Naive thymus-derived CD4-positive, alpha-beta T cell (primary cell): ENCODE measurements at regions of chr19 and their contacts with region 1.

Region 1: DNA sequence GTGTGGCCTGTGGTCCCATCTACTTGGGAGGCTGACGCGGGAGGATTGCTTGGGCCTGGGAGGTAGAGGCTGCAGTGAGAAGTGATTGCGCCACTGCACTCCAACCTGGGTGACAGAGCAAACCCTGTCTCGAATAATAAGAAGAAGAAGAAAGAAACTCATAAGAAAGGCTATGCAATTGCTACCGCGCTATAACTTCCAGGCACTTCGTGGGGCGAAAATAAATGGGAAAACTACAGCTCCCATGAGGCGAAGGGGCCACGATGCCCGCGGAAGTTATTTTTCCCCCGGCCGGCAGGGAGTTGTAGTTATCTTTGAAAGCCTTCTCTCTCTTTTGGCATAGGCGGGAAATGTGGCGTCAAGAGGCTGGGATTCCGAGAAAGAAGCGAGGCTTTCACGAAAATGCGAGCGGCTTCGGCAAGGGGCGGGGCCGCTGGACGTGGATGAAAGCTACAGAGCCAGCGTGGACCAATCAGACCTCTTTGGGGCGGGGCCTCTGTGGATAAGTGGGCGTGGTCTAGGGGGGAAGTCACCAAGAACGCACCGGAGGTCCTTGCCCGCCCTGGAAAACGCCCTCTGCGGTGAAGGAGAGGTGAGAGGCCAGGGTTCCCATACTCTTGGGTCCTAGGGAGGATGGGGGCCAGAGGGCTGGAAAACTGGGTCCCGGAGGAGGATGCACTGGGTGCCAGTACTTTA is at the start of gene NUCB1:
- DNase-seq: peak; percentile 92 to 99 (median 98)
- ATAC-seq: peak; percentile 100
- H3K4me3 ChIP-seq: peak within 1 kb of the TSS; percentile 92
- H3K4me3 Mint-ChIP-seq: peak within 1 kb of the TSS; percentile 87 to 100 (median 98)
- H3K27ac ChIP-seq: peak within 1 kb of the TSS; percentile 92
- H3K27ac Mint-ChIP-seq: peak within 1 kb of the TSS; percentile 78 to 100 (median 98)
- H3K4me1 ChIP-seq: peaks cover 11 to 12% of the 10 kb centered on the region in 2 donors
- H3K4me1 Mint-ChIP-seq: peaks cover 14 to 44% (median 32%) of the 10 kb centered on the region in 7 donors
- H3K27me3 ChIP-seq: peaks cover 2 to 4% of the 10 kb centered on the region in 2 donors
- H3K27me3 Mint-ChIP-seq: peaks cover under 1 to 11% (median 2%) of the 10 kb centered on the region in 5 donors
- total RNA-seq, gene NUCB1: 128 to 252 (median 142) TPM

Region 2: DNA sequence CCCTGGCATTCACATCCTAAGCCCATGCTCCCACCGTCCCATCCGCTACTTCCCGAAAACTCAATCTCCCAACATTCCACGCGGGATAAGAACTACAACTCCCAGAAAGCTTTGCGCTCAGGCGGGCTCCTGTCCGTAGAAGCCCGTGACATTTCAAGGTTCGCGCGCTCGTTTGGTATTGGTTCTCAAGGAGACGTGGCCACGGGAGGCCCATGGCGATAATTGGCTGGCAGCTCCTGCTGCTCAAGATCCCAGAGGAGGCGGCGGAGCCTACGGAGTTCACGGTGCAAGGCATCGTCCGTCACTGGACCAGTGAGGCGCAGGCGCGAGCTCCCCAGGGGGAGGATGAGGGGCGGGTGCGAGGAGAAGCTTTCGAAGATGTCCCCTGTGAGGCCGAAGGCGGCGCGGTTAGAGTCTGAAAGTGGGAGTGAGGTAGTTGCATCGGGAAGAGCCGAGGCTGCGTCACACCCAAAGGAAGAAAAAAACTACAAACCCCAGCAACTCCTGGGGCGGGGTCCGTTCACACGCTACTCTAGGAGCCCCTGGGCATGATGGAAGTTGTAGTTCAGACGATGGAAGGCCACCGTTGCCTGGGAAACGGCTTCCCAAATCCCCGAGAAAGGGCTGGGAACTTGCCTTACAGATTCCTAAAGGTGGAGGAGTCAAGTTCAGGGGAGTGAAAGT is 179.2 kb before region 1 on chr19:
- CTCF ChIA-PET with region 1: no interaction called
- POLR2A ChIA-PET with region 1: no interaction called
- intact Hi-C with region 1: loop called in 1 of 2 experiments (anchors 2 kb)
- DNase-seq: peak; percentile 77 to 93 (median 89)
- ATAC-seq: peak; percentile 91
- H3K4me3 ChIP-seq: peak overlapping the region; percentile 92
- H3K4me3 Mint-ChIP-seq: peak overlapping the region; percentile 80 to 99 (median 97)
- H3K27ac ChIP-seq: peak overlapping the region; percentile 80
- H3K27ac Mint-ChIP-seq: peak overlapping the region; percentile 98 to 100 (median 99)
- H3K4me1 ChIP-seq: peaks cover 5 to 17% of the 10 kb centered on the region in 2 donors
- H3K4me1 Mint-ChIP-seq: peaks cover 19 to 30% (median 25%) of the 10 kb centered on the region in 7 donors
- H3K27me3 ChIP-seq: no peaks in the 10 kb centered on the region
- H3K27me3 Mint-ChIP-seq: no peaks in the 10 kb centered on the region

Region 3: GRCh38 chr19:48858984-48859710 is 40.8 kb before region 1 on chr19:
- CTCF ChIA-PET with region 1: no interaction called
- POLR2A ChIA-PET with region 1: no interaction called
- intact Hi-C with region 1: loop called in 1 of 2 experiments (anchors 1 kb)
- DNase-seq: peak; percentile 54 to 83 (median 77)
- ATAC-seq: peak; percentile 87
- H3K4me3 ChIP-seq: peak overlapping the region; percentile 48
- H3K4me3 Mint-ChIP-seq: peak overlapping the region; percentile 90 to 99 (median 94)
- H3K27ac ChIP-seq: peak overlapping the region; percentile 56
- H3K27ac Mint-ChIP-seq: peak overlapping the region; percentile 7 to 94 (median 91)
- H3K4me1 ChIP-seq: no peaks in the 10 kb centered on the region
- H3K4me1 Mint-ChIP-seq: peaks cover 0 to 8% (median 0%) of the 10 kb centered on the region in 7 donors
- H3K27me3 ChIP-seq: no peaks in the 10 kb centered on the region
- H3K27me3 Mint-ChIP-seq: no peaks in the 10 kb centered on the region

Region 4: GRCh38 chr19:48933382-48933932 is 33.5 kb after region 1 on chr19 and contains the start of gene DHDH:
- CTCF ChIA-PET with region 1: interaction called, 4 read pairs
- POLR2A ChIA-PET with region 1: interaction called, 8 read pairs
- intact Hi-C with region 1: loop called (anchors 1 kb)
- DNase-seq: peak; percentile 75 to 90 (median 87)
- ATAC-seq: peak; percentile 98
- H3K4me3 ChIP-seq: peak within 1 kb of the TSS; percentile 50
- H3K4me3 Mint-ChIP-seq: peak within 1 kb of the TSS; percentile 78 to 91 (median 86)
- H3K27ac ChIP-seq: peak within 1 kb of the TSS; percentile 57
- H3K27ac Mint-ChIP-seq: peak within 1 kb of the TSS; percentile 66 to 94 (median 91)
- H3K4me1 ChIP-seq: peaks cover 6 to 7% of the 10 kb centered on the region in 2 donors
- H3K4me1 Mint-ChIP-seq: peaks cover 7 to 17% (median 14%) of the 10 kb centered on the region in 7 donors
- H3K27me3 ChIP-seq: no peaks in the 10 kb centered on the region
- H3K27me3 Mint-ChIP-seq: peaks cover 0 to 16% (median 0%) of the 10 kb centered on the region in 5 donors
- total RNA-seq, gene DHDH: 1.1 to 1.7 (median 1.3) TPM

Region 5: GRCh38 chr19:48965040-48965805 is 65.3 kb after region 1 on chr19 and contains the start of gene FTL:
- CTCF ChIA-PET with region 1: interaction called, 4 read pairs
- POLR2A ChIA-PET with region 1: interaction called, 7 read pairs
- intact Hi-C with region 1: loop called (anchors 1 kb)
- DNase-seq: peak; percentile 77 to 93 (median 84)
- ATAC-seq: peak; percentile 85
- H3K4me3 ChIP-seq: peak within 1 kb of the TSS; percentile 86
- H3K4me3 Mint-ChIP-seq: peak within 1 kb of the TSS; percentile 94 to 100 (median 99)
- H3K27ac ChIP-seq: peak within 1 kb of the TSS; percentile 73
- H3K27ac Mint-ChIP-seq: peak within 1 kb of the TSS; percentile 93 to 100 (median 97)
- H3K4me1 ChIP-seq: peaks cover 30 to 37% of the 10 kb centered on the region in 2 donors
- H3K4me1 Mint-ChIP-seq: peaks cover 42 to 69% (median 62%) of the 10 kb centered on the region in 7 donors
- H3K27me3 ChIP-seq: no peaks in the 10 kb centered on the region
- H3K27me3 Mint-ChIP-seq: no peaks in the 10 kb centered on the region
- total RNA-seq, gene FTL: 888 to 1,929 (median 1,286) TPM

Region 6: DNA sequence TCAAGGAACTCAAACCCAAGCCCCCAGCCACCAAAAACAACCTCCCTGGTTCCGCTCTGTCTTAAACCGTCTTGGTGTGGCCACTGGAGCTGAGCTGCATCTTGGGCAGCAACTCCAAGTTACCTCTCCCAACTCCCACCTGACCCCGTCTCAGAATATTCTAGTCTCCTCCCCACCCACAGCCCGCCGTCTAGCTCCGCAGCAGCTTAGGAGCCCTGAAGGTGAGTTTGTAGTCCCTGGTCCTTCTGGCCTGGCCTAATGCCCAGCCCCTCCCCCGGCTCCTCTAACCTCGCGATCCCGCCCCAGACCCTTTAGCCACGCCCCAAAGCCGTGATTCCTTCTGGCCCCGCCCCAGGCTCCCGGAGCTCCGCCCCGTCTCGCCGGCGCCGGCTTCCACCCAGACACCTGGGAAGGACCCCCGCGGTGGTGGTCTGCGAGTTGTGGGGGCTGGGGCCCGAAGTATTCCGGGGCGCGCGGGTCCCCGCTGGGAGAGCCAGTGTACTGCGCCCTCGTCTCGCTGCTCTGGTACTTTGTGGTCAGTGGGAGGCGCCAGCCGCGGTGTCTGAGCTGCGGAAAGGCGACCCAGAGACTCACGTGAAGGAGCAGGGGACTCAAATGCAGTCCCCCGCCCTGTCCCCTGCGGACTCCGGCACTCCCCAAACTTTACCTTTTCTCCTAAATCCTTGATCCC is 119.5 kb after region 1 on chr19:
- CTCF ChIA-PET with region 1: no interaction called
- POLR2A ChIA-PET with region 1: no interaction called
- intact Hi-C with region 1: no loop called
- DNase-seq: peak; percentile 33 to 76 (median 55)
- ATAC-seq: peak; percentile 65
- H3K4me3 ChIP-seq: peak overlapping the region; percentile 76
- H3K4me3 Mint-ChIP-seq: peak overlapping the region; percentile 78 to 95 (median 90)
- H3K27ac ChIP-seq: no peak overlapping the region
- H3K27ac Mint-ChIP-seq: peak overlapping the region in 7 of 9 donors; percentile 36 to 81 (median 66)
- H3K4me1 ChIP-seq: peaks cover 0 to 4% of the 10 kb centered on the region in 2 donors
- H3K4me1 Mint-ChIP-seq: peaks cover 7 to 22% (median 18%) of the 10 kb centered on the region in 7 donors
- H3K27me3 ChIP-seq: no peaks in the 10 kb centered on the region
- H3K27me3 Mint-ChIP-seq: peaks cover 0 to 22% (median 0%) of the 10 kb centered on the region in 5 donors

Region 7: GRCh38 chr19:49264258-49264657 is 364.3 kb after region 1 on chr19:
- CTCF ChIA-PET with region 1: no interaction called
- POLR2A ChIA-PET with region 1: no interaction called
- intact Hi-C with region 1: no loop called
- DNase-seq: no peak
- ATAC-seq: no peak
- H3K4me3 ChIP-seq: no peak overlapping the region
- H3K4me3 Mint-ChIP-seq: no peak overlapping the region
- H3K27ac ChIP-seq: no peak overlapping the region
- H3K27ac Mint-ChIP-seq: no peak overlapping the region
- H3K4me1 ChIP-seq: no peaks in the 10 kb centered on the region
- H3K4me1 Mint-ChIP-seq: peaks cover 0 to 8% (median 0%) of the 10 kb centered on the region in 7 donors
- H3K27me3 ChIP-seq: no peaks in the 10 kb centered on the region
- H3K27me3 Mint-ChIP-seq: peaks cover 13 to 30% (median 24%) of the 10 kb centered on the region in 5 donors